ENCODE measurements at regions of chr2 and their contacts with region 1.

Region 1: DNA sequence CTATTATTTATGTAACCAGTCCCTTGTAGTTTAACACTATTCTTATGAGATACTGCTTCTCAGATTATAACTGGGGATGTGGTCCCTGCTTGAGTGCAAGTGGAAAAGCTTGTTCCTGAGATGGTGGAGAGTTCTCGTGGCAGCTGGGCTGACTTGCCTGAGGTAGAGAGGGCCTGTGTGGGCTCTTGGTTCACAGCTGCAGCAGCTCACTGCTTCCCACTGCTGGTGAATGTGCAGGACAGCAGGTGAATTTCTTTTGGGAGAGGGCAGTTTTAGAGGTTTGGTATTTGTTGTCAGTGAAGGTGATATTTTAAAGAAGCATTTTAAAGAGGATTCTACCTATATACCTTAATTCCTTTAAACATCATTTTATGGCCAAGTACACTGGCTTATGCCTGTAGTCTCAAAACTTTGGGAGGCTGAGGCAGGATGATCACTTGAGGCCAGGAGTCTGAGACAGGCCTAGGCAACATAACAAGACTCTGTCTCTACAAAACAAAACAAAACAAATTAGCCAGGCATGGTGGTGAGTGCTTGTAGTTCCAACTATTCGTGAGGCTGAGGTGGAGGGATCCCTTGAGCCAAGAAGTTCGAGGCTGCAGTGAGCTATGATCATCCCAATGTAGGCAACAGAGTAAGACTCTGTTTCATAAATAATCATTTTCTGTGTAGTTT is 94.8 kb downstream of the MTA3 start:
- DNase-seq: peak; percentile 83
- H3K4me3 ChIP-seq: no peak overlapping the region
- H3K27ac ChIP-seq: no peak overlapping the region
- H3K4me1 ChIP-seq: peaks cover 4% of the 10 kb centered on the region
- H3K27me3 ChIP-seq: no peaks in the 10 kb centered on the region
- CTCF ChIP-seq: peak; percentile 99

Region 2: GRCh38 chr2:41853427-41854216 is 809.6 kb before region 1 on chr2:
- CTCF ChIA-PET with region 1: no interaction called
- POLR2A ChIA-PET with region 1: no interaction called
- intact Hi-C with region 1: loop called (anchors 10 kb)
- DNase-seq: peak; percentile 82
- H3K4me3 ChIP-seq: no peak overlapping the region
- H3K27ac ChIP-seq: no peak overlapping the region
- H3K4me1 ChIP-seq: no peaks in the 10 kb centered on the region
- H3K27me3 ChIP-seq: no peaks in the 10 kb centered on the region
- CTCF ChIP-seq: peak; percentile 81

Region 3: DNA sequence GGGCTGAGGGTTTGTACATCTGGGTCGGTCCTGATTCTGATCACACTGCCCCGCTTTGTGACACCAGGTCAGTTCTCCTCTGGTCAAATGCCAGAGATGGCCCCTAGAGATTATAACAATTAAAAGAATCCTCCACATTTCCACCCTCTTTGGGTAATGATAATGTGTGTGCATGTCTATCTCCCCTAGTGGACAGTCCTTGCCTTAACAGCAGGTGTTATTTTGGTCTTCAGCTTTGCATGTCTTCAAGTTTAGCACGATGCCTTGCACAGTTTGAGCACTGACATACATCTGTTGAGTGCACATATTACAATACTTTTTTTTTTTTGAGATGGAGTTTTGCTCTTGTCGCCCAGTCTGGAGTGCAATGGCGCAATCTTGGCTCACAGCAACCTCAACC is 276.6 kb before region 1 on chr2:
- CTCF ChIA-PET with region 1: no interaction called
- POLR2A ChIA-PET with region 1: no interaction called
- intact Hi-C with region 1: loop called (anchors 10 kb)
- DNase-seq: peak; percentile 21
- H3K4me3 ChIP-seq: no peak overlapping the region
- H3K27ac ChIP-seq: no peak overlapping the region
- H3K4me1 ChIP-seq: peaks cover 6% of the 10 kb centered on the region
- H3K27me3 ChIP-seq: no peaks in the 10 kb centered on the region
- CTCF ChIP-seq: peak; percentile 63

Region 4: GRCh38 chr2:42513257-42513918 is 149.9 kb before region 1 on chr2:
- CTCF ChIA-PET with region 1: interaction called, 12 read pairs
- POLR2A ChIA-PET with region 1: no interaction called
- intact Hi-C with region 1: loop called (anchors 2 kb)
- DNase-seq: peak; percentile 77
- H3K4me3 ChIP-seq: no peak overlapping the region
- H3K27ac ChIP-seq: no peak overlapping the region
- H3K4me1 ChIP-seq: peaks cover 5% of the 10 kb centered on the region
- H3K27me3 ChIP-seq: no peaks in the 10 kb centered on the region
- CTCF ChIP-seq: peak; percentile 76

Region 5: DNA sequence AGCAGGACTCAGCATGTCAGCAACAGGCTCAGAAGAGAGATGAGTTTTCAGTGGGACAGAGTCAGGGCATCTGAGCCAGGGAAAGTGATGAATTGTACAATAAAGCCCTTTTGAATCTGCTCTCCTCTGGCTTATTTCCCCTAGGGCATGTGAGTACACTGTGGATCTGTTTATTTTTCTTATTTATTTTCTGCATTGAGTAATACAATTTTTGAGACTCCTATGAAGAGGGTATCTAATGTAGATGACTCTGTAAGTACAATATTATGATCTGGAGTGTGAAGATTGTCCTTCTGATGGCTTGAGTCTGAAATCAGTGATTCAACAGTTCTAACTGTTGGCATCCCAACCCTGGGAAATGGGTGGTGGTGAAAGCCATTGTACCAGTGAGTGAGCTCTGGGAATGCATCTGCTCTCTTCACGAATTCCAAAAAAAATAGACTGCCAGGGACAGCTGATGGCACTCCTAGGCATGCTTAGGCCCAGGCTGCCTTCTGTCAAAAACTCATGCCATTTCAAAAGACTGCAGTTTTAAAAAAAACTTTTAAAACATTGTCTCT is 80.2 kb after region 1 on chr2:
- CTCF ChIA-PET with region 1: no interaction called
- POLR2A ChIA-PET with region 1: no interaction called
- intact Hi-C with region 1: no loop called
- DNase-seq: no peak
- H3K4me3 ChIP-seq: no peak overlapping the region
- H3K27ac ChIP-seq: no peak overlapping the region
- H3K4me1 ChIP-seq: no peaks in the 10 kb centered on the region
- H3K27me3 ChIP-seq: no peaks in the 10 kb centered on the region
- CTCF ChIP-seq: no peak